AG04449 (cell line): ENCODE measurements at regions of chr16 and their contacts with region 1.

Region 1: GRCh38 chr16:90081606-90081970 is 4.5 kb upstream of the PRDM7 start:
- DNase-seq: no peak
- H3K4me3 ChIP-seq: no peak overlapping the region
- CTCF ChIP-seq: no peak

Region 2: DNA sequence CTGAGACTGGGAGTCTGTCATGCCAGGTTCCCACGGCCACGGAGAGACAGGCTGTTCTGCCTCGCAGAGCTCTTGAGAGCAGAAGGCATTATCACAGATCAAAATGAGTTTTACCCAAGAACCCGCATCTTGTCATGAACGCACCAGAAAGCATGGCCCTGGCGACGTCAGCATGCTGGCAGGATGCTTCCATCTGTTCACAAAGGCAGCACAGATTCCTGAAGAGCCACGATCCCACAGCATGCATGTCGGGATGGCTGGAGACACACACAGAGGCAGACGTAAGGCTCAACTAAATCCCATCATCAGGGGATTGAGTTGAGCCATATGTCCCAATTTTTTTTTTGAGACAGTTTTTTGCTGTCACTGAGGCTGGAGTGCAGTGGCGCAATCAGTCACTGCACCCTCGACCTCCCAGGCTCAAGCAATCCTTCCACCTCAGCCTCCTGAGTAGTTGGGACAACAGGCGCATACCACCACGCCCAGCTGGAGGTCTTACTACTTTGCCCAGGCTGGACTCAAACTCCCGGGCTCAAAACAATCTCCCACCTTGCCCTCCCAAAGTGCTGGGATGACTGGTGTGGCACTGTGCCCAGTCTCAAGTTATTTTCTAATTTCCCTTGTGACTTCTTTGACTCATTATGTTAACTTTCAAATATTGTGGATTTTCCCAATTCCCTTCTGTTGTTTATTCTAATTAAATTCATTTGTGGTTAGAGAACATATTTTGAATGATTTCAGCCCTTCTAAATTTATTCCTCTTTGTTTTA is 276.3 kb before region 1 on chr16:
- CTCF ChIA-PET with region 1: no interaction called
- POLR2A ChIA-PET with region 1: no interaction called
- DNase-seq: no peak
- H3K4me3 ChIP-seq: no peak overlapping the region
- CTCF ChIP-seq: no peak

Region 3: DNA sequence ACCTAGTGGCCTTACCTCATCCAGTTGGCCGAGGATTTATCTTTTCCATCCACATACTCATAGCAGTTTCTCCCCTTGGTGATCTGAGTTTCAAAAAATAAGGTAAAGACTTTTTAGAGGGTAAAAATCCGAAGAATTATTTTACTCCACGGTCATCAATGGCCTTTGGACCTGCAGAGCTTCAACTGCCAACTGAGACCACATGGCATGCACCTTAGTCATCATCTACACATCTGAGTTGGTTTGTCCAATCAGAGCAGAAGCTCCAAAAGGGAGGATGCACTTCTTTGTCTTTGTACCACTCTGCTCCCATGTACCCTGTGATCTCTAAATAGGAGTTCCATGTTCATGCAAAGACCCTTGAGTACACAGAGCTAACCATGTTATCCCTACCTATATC is 20.2 kb before region 1 on chr16:
- CTCF ChIA-PET with region 1: interaction called, 10 read pairs
- POLR2A ChIA-PET with region 1: interaction called, 3 read pairs
- DNase-seq: no peak
- H3K4me3 ChIP-seq: no peak overlapping the region
- CTCF ChIP-seq: no peak

Region 4: GRCh38 chr16:90070440-90070839 is 11.1 kb before region 1 on chr16:
- CTCF ChIA-PET with region 1: interaction called, 14 read pairs
- POLR2A ChIA-PET with region 1: no interaction called
- DNase-seq: no peak
- H3K4me3 ChIP-seq: no peak overlapping the region
- CTCF ChIP-seq: no peak